ENCODE measurements at regions of chr1 and their contacts with region 1.

Region 1: GRCh38 chr1:153677718-153678505 is 576 bp upstream of the NPR1 start:
- DNase-seq: no peak
- H3K4me3 ChIP-seq: peak overlapping the region; percentile 29; the same call in 1 of the 2 replicates
- H3K27me3 ChIP-seq: peaks cover 36% of the 10 kb centered on the region
- CTCF ChIP-seq: peak; percentile 98

Region 2: DNA sequence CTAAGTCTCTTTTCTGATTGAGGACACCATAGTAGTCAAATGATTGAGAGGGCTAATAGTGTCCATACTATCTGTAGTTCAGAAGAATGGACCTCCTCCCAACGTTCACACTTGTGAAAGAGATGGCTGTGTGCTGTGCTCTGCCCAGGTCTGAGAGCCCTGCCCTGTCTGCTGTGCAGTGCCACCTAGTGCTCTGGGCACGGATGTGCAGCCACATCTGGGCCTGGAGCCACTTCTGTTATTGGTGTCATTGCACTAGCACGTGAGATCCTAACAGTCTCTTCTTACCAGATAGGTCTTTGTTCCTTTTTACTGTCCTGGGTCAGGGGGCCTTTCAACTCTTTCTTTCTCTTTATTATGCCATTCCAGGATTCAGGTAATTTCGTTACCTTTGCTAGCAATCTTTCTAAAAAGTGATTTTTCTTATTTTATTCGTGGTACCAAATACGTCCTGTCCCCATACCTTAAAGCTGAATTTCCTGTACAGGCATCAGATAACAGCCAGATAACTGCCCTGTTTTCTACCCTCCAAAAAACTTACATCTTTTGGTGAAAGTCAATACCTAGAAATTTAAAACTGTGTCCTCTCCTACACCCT is 71.6 kb after region 1 on chr1:
- CTCF ChIA-PET with region 1: interaction called, 43 read pairs
- POLR2A ChIA-PET with region 1: no interaction called
- DNase-seq: peak; percentile 24
- H3K4me3 ChIP-seq: no peak overlapping the region
- H3K27me3 ChIP-seq: no peaks in the 10 kb centered on the region
- CTCF ChIP-seq: peak; percentile 96

Region 3: DNA sequence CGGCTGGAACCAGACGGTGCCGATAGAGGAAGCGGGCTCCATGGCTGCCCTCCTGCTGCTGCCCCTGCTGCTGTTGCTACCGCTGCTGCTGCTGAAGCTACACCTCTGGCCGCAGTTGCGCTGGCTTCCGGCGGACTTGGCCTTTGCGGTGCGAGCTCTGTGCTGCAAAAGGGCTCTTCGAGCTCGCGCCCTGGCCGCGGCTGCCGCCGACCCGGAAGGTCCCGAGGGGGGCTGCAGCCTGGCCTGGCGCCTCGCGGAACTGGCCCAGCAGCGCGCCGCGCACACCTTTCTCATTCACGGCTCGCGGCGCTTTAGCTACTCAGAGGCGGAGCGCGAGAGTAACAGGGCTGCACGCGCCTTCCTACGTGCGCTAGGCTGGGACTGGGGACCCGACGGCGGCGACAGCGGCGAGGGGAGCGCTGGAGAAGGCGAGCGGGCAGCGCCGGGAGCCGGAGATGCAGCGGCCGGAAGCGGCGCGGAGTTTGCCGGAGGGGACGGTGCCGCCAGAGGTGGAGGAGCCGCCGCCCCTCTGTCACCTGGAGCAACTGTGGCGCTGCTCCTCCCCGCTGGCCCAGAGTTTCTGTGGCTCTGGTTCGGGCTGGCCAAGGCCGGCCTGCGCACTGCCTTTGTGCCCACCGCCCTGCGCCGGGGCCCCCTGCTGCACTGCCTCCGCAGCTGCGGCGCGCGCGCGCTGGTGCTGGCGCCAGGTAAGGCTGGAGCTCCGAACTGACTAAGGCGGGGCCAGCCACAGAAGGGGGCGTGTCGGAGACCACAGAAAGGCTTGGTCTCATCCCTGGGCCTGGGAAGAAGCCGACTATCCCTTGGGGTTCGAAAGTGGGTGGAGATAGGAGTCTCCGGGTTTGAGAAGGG is 97.8 kb after region 1 on chr1:
- CTCF ChIA-PET with region 1: interaction called, 14 read pairs
- POLR2A ChIA-PET with region 1: no interaction called
- DNase-seq: no peak
- H3K4me3 ChIP-seq: peak overlapping the region; percentile 62
- H3K27me3 ChIP-seq: no peaks in the 10 kb centered on the region
- CTCF ChIP-seq: no peak